Stomach (tissue), 19 donors: ENCODE measurements at regions of chr10 and their contacts with region 1.

Region 1: GRCh38 chr10:103598654-103599115 is 105.2 kb downstream of the NEURL1 start:
- DNase-seq: peak; percentile 60 to 91
- H3K4me3 ChIP-seq: no peak overlapping the region
- H3K27ac ChIP-seq: peak overlapping the region in 1 of 5 donors; percentile 22
- H3K4me1 ChIP-seq: peaks cover 0 to 33% (median 18%) of the 10 kb centered on the region in 4 donors
- H3K27me3 ChIP-seq: no peaks in the 10 kb centered on the region
- CTCF ChIP-seq: peak in 5 of 7 experiments; percentile 37 to 83 (median 52)
- EP300 ChIP-seq: no peak
- POLR2A ChIP-seq: no peak

Region 2: DNA sequence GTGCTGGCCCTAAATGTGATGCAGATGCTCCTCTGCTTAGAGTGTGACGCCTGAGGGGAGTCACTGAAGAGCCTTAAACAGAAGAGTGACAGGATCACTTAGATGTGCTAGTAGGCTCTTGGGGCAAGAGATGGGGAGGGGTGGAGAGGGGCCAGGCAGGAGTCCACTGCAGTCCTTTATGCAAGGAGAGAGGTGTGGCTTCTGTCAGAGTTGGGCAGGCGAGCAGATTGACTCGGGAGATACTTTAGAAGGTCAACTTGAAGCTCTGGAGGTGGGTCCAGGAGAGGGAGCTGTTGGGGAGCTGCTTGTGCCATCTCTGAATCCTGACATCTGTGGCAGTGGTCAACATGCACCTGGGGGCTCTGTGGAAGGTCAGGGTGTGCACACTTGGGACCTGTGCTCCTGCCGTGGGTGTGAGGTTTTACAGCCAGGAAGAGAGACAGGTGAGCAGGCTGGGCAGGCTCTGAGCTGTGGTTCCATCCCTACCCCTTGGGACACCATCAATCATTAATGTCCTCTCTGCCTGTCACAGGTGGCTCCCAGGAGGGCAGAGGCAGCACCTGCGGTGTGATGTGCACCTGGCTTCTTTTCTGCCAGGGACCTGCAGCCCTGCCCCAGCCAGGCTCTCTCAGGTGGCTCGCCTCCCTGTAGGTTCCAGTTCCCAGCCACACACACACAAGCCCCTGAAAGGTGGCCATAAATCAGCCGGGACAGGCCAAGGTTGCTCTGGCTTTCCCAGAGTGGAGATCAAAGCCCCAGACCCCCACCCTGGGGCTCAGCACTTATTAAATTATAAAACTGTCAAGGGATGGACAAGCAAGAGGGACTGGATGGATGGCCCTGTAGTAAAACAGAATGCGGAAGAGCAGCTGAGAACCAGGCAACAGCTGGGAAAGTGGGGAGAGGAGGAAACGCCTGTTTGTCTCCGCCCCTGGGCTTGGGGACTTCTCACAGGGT is 91.2 kb before region 1 on chr10:
- intact Hi-C with region 1: no loop called
- DNase-seq: peak in 1 of 2 donors; percentile 67
- H3K4me3 ChIP-seq: no peak overlapping the region
- H3K27ac ChIP-seq: no peak overlapping the region
- H3K4me1 ChIP-seq: peaks cover 5 to 12% (median 7%) of the 10 kb centered on the region in 4 donors
- H3K27me3 ChIP-seq: peaks cover 0 to 9% (median 0%) of the 10 kb centered on the region in 3 donors
- CTCF ChIP-seq: no peak
- EP300 ChIP-seq: no peak
- POLR2A ChIP-seq: no peak

Region 3: GRCh38 chr10:103685880-103686669 is 87.4 kb after region 1 on chr10:
- intact Hi-C with region 1: loop called (anchors 5 kb)
- DNase-seq: peak; percentile 82 to 88
- H3K4me3 ChIP-seq: no peak overlapping the region
- H3K27ac ChIP-seq: peak overlapping the region in 4 of 5 donors; percentile 35 to 73 (median 61)
- H3K4me1 ChIP-seq: peaks cover 0 to 22% (median 8%) of the 10 kb centered on the region in 4 donors
- H3K27me3 ChIP-seq: no peaks in the 10 kb centered on the region
- CTCF ChIP-seq: peak in 6 of 7 experiments; percentile 40 to 99 (median 94)
- EP300 ChIP-seq: no peak
- POLR2A ChIP-seq: no peak